ENCODE measurements at regions of chr11 and their contacts with region 1.

Region 1: DNA sequence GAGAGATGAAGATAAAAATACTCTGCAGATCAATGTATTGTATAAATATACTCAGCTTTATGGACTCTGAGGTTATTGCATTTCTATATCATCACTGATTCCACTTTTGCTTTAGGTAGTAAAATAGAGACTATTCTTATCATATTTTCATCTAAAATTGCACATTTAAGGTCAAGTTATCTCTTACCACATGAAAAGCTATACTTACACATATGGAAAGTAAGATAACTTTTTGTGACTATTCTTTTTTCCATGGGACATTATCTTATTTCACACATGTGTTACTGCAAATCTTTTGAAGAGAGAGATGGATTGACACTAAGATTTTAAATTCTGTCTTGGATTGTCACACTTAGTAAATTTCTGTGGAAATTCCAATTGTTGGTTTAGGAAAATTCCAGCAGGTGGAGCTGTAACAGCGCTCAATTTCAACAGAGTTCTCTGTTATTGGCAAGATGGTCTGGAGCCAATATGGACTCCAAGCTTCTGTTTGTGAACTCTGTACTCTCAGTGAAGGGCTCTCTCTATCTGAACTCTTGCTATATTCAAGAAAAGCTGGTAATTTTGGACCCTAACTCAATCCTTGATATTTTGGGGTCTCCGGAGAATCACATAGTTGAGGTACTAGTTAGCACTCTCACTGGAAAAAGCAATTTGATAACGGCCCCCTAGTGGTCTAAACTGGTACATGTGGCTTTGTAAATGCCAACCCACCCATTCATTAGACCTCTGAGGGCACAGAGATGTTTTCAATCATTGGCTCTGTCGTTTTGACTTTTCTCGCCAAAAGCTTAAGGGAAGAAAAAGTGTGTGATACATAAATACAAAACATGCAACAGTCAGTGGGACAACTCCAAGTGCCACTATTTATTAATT is 429.7 kb downstream of the ETS1 start:
- DNase-seq: peak; percentile 68
- ATAC-seq: peak; percentile 91
- H3K4me3 Mint-ChIP-seq: peak overlapping the region; percentile 60
- H3K27ac Mint-ChIP-seq: peak overlapping the region; percentile 86
- H3K4me1 Mint-ChIP-seq: peaks cover 10% of the 10 kb centered on the region
- H3K27me3 Mint-ChIP-seq: no peaks in the 10 kb centered on the region

Region 2: GRCh38 chr11:127726367-127726766 is 431.3 kb before region 1 on chr11:
- CTCF ChIA-PET with region 1: no interaction called
- POLR2A ChIA-PET with region 1: no interaction called
- intact Hi-C with region 1: no loop called
- DNase-seq: no peak
- ATAC-seq: no peak
- H3K4me3 Mint-ChIP-seq: no peak overlapping the region
- H3K27ac Mint-ChIP-seq: no peak overlapping the region
- H3K4me1 Mint-ChIP-seq: no peaks in the 10 kb centered on the region
- H3K27me3 Mint-ChIP-seq: no peaks in the 10 kb centered on the region

Region 3: DNA sequence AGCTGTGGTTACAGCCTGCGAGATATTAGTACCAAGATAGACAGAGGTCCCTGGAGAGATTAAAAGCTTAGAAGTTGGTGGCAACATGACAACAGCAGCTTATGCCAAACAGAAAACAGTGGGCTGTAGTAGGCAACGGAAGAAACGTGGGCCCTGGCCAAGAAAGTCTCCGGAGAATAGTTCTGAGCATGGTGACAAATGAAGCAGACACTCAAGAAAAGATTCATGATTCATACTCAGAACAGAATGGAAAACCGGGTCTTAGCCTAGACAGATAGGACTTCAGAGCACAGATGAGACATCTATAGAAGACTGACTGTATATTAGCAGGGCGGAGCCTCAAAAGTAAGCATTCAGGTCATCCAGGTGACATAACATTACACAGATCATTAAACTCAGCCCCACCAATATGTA is 297.7 kb before region 1 on chr11:
- CTCF ChIA-PET with region 1: no interaction called
- POLR2A ChIA-PET with region 1: no interaction called
- intact Hi-C with region 1: no loop called
- DNase-seq: no peak
- ATAC-seq: no peak
- H3K4me3 Mint-ChIP-seq: no peak overlapping the region
- H3K27ac Mint-ChIP-seq: no peak overlapping the region
- H3K4me1 Mint-ChIP-seq: no peaks in the 10 kb centered on the region
- H3K27me3 Mint-ChIP-seq: peaks cover 7% of the 10 kb centered on the region

Region 4: DNA sequence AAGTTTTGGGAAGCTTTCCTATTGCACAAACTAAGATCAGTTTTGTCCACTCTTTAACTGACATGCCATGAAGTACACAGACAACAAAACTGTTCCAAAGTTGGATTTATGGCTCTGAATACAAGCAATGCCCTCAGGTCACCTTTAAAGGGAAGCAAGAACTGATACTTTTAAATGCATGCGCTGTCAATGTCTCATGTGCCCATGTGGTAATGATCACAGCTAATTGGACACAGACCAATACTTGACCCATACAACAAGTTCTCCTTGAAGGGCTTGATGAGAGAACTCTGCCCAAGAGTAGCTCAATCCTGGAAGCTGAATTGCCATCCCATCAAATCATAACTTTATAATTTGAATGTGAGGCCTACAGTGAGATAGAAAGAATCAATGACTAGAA is 195.2 kb before region 1 on chr11:
- CTCF ChIA-PET with region 1: no interaction called
- POLR2A ChIA-PET with region 1: no interaction called
- intact Hi-C with region 1: no loop called
- DNase-seq: no peak
- ATAC-seq: no peak
- H3K4me3 Mint-ChIP-seq: no peak overlapping the region
- H3K27ac Mint-ChIP-seq: no peak overlapping the region
- H3K4me1 Mint-ChIP-seq: no peaks in the 10 kb centered on the region
- H3K27me3 Mint-ChIP-seq: peaks cover 19% of the 10 kb centered on the region

Region 5: GRCh38 chr11:128026596-128026995 is 131.1 kb before region 1 on chr11:
- CTCF ChIA-PET with region 1: interaction called, 37 read pairs
- POLR2A ChIA-PET with region 1: no interaction called
- intact Hi-C with region 1: loop called (anchors 1 kb)
- DNase-seq: no peak
- ATAC-seq: no peak
- H3K4me3 Mint-ChIP-seq: no peak overlapping the region
- H3K27ac Mint-ChIP-seq: no peak overlapping the region
- H3K4me1 Mint-ChIP-seq: peaks cover 8% of the 10 kb centered on the region
- H3K27me3 Mint-ChIP-seq: no peaks in the 10 kb centered on the region

Region 6: DNA sequence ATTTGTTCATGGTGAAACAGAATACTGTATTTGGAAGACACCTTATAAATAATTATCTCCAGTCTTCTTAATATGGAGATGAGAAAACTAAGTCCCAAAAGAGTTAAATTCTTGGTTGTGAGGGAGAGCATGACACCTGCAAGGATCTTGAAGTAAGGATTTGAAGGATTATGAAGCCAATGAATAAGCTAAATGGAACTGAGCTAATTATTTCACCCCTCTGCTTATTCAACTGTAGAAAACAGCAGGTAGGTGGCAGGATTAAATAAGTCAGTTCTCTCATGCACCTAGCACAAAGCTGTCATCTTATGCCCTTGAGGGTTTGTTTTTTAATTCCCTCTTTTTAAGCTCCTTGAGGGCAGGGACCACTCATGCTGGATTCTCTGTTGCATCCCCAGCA is 27.6 kb before region 1 on chr11:
- CTCF ChIA-PET with region 1: interaction called, 18 read pairs
- POLR2A ChIA-PET with region 1: no interaction called
- intact Hi-C with region 1: no loop called
- DNase-seq: no peak
- ATAC-seq: no peak
- H3K4me3 Mint-ChIP-seq: no peak overlapping the region
- H3K27ac Mint-ChIP-seq: no peak overlapping the region
- H3K4me1 Mint-ChIP-seq: no peaks in the 10 kb centered on the region
- H3K27me3 Mint-ChIP-seq: no peaks in the 10 kb centered on the region

Region 7: GRCh38 chr11:128182844-128183243 is 25.2 kb after region 1 on chr11:
- CTCF ChIA-PET with region 1: interaction called, 10 read pairs
- POLR2A ChIA-PET with region 1: no interaction called
- intact Hi-C with region 1: no loop called
- DNase-seq: peak; percentile 28
- ATAC-seq: peak; percentile 85
- H3K4me3 Mint-ChIP-seq: no peak overlapping the region
- H3K27ac Mint-ChIP-seq: no peak overlapping the region
- H3K4me1 Mint-ChIP-seq: peaks cover 21% of the 10 kb centered on the region
- H3K27me3 Mint-ChIP-seq: no peaks in the 10 kb centered on the region

Region 8: GRCh38 chr11:128297091-128297651 is 139.5 kb after region 1 on chr11:
- CTCF ChIA-PET with region 1: no interaction called
- POLR2A ChIA-PET with region 1: no interaction called
- intact Hi-C with region 1: no loop called
- DNase-seq: peak; percentile 46
- ATAC-seq: peak; percentile 31
- H3K4me3 Mint-ChIP-seq: no peak overlapping the region
- H3K27ac Mint-ChIP-seq: peak overlapping the region; percentile 93
- H3K4me1 Mint-ChIP-seq: peaks cover 95% of the 10 kb centered on the region
- H3K27me3 Mint-ChIP-seq: no peaks in the 10 kb centered on the region

Region 9: DNA sequence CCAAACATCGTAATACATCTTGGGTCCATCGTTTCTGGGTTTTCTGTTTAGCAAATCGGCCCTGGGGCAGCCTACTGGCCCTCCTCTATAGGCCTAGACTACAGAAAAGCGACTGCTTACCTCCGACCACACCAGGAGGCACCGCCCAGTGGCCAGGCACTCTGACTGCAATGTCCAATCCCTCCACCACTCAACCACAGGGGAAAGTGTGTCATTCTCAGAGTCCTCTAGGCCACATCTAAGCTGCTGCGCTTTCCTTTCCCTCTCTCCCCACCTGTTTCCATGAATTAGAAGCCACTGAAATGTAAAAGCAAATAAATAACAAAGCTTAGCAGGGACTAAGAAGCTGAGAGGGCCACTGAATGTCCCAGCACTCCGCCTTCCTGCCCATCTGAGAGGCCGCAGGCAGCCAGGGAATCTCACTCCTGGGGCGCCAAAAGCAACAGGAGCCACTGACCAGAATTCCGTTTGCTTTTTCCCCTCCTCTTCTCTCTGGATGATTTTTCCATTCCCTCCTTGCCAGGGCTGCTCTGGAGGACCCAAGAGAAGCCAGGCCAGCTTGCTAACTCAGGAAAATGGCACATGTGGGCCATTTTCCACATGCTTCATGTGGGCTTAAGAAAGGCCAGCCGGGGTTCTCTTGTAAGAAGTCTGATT is 486.1 kb after region 1 on chr11:
- CTCF ChIA-PET with region 1: interaction called, 10 read pairs
- POLR2A ChIA-PET with region 1: no interaction called
- intact Hi-C with region 1: no loop called
- DNase-seq: no peak
- ATAC-seq: no peak
- H3K4me3 Mint-ChIP-seq: no peak overlapping the region
- H3K27ac Mint-ChIP-seq: no peak overlapping the region
- H3K4me1 Mint-ChIP-seq: peaks cover 5% of the 10 kb centered on the region
- H3K27me3 Mint-ChIP-seq: no peaks in the 10 kb centered on the region

Region 10: GRCh38 chr11:128848815-128849455 is 691.3 kb after region 1 on chr11:
- CTCF ChIA-PET with region 1: interaction called, 11 read pairs
- POLR2A ChIA-PET with region 1: no interaction called
- intact Hi-C with region 1: no loop called
- DNase-seq: peak; percentile 84
- ATAC-seq: peak; percentile 85
- H3K4me3 Mint-ChIP-seq: no peak overlapping the region
- H3K27ac Mint-ChIP-seq: no peak overlapping the region
- H3K4me1 Mint-ChIP-seq: peaks cover 18% of the 10 kb centered on the region
- H3K27me3 Mint-ChIP-seq: no peaks in the 10 kb centered on the region

Region 11: DNA sequence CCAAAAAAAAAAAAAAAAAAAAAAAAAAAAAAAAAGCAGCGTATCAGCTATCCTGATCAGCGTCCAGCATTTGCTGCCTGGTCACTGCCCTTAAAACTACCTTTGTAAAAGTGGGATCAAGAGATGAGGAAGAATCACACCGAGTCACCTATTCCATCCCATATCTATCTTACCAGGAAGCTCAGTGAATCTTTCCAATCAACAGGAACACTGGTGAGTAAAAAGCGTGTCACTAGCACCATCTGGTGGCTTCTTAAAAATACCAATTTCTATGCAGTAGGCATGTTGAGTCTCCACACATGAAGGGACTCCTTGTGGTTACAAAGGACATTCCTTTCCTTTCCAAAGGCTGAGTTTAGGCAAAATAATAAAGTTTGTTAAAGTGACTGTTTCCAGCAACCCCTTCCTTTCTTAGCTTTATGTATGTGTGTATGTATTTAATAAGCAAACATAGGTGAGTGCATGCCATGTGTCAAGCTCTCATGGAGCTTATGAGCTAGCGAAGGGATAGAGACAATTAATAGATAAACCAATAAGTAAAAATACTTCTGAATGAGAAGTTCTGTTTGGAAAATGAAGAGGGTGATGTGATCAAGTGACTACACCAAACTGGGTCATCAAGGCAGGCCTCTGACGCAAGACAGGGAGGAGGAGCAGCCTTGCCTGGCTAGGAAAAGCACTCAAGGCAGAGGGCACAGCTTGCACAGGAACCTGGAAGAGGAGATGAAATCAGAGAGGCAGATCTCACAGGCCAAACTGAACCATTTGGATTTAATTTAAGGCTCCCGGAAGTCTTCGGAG is 798.9 kb after region 1 on chr11:
- CTCF ChIA-PET with region 1: interaction called, 4 read pairs
- POLR2A ChIA-PET with region 1: no interaction called
- intact Hi-C with region 1: loop called in 1 of 2 experiments (anchors 1 kb)
- DNase-seq: peak; percentile 20
- ATAC-seq: peak; percentile 57
- H3K4me3 Mint-ChIP-seq: no peak overlapping the region
- H3K27ac Mint-ChIP-seq: no peak overlapping the region
- H3K4me1 Mint-ChIP-seq: peaks cover 2% of the 10 kb centered on the region
- H3K27me3 Mint-ChIP-seq: peaks cover 2% of the 10 kb centered on the region

Measured in activated CD4-positive, alpha-beta T cell treated with anti-CD3 and anti-CD28 coated beads for 36 hours (primary cell).